Psoas muscle (tissue), 8 donors: ENCODE measurements at regions of chr18 and their contacts with region 1.

Region 1: DNA sequence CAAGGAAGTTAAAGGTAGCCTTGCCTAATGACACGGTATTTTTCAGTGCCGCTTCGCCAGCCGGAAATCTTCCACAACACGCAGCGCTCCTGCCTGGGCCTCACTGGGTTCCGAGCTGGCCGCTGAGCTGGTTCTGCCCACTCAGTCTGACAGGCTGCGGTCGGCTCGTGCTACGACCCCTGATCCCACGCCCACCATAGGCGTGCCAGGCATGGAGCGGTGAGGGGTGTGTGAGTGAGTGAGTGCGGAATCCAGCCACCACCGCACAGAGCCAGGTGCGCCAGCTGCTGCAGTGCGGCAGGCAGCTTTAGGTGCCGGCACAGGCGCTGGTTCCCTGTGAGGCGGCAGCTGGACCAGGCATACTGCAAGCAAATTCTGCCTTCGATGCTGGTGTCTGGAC is 407.9 kb downstream of the DCC start:
- DNase-seq: peak in 1 of 2 donors; percentile 49
- ATAC-seq: no peak
- H3K4me3 ChIP-seq: no peak overlapping the region
- H3K27ac ChIP-seq: no peak overlapping the region
- H3K4me1 ChIP-seq: no peaks in the 10 kb centered on the region
- H3K27me3 ChIP-seq: no peaks in the 10 kb centered on the region
- CTCF ChIP-seq: no peak

Region 2: GRCh38 chr18:52237551-52237950 is 510.3 kb before region 1 on chr18:
- intact Hi-C with region 1: no loop called
- DNase-seq: no peak
- ATAC-seq: no peak
- H3K4me3 ChIP-seq: no peak overlapping the region
- H3K27ac ChIP-seq: no peak overlapping the region
- H3K4me1 ChIP-seq: no peaks in the 10 kb centered on the region
- H3K27me3 ChIP-seq: no peaks in the 10 kb centered on the region
- CTCF ChIP-seq: no peak

Region 3: DNA sequence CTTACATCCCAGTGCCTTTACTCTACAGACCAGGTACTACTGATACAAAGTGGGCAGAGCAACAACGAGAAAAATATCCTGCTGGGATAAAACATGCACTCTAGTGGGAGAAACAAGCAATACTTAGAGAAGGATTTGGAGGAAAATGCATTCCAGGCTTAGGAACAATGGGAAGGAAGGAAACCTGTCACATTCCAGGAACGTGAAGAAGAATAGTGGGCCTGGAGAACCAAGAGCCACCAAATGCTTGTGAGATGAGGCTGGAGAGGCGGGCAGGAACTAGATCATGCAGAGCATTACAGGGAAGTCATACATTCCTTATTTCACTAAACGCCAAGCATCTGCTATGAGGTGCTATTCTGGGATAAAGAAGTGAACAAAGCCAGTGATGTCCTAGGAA is 65.6 kb before region 1 on chr18:
- intact Hi-C with region 1: loop called in 1 of 2 experiments (anchors 10 kb)
- DNase-seq: no peak
- ATAC-seq: no peak
- H3K4me3 ChIP-seq: no peak overlapping the region
- H3K27ac ChIP-seq: no peak overlapping the region
- H3K4me1 ChIP-seq: no peaks in the 10 kb centered on the region
- H3K27me3 ChIP-seq: no peaks in the 10 kb centered on the region
- CTCF ChIP-seq: no peak

Region 4: DNA sequence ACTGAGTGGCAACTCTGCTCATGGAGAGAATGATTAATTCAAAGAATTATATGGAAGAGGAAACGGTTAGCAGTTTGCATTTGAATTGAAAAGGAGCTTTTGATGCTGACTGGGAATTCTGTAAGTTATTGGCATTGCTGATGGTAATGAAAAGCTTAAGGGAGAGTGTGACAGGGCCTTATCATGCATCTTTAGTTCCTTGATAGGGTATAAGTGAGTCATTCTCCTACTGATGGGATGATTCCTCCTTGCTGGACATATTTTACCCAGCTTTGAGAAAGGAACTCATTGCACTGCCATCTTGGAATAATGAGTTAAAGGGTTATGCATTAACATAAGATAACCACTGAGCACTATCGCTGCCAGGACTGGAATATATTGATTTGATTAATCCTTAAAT is 332.8 kb after region 1 on chr18:
- intact Hi-C with region 1: no loop called
- DNase-seq: no peak
- ATAC-seq: no peak
- H3K4me3 ChIP-seq: no peak overlapping the region
- H3K27ac ChIP-seq: no peak overlapping the region
- H3K4me1 ChIP-seq: no peaks in the 10 kb centered on the region
- H3K27me3 ChIP-seq: no peaks in the 10 kb centered on the region
- CTCF ChIP-seq: no peak